Naive thymus-derived CD4-positive, alpha-beta T cell (primary cell): ENCODE measurements at regions of chr12 and their contacts with region 1.

Region 1: GRCh38 chr12:7188562-7189397 is 706 bp upstream of the PEX5 start:
- DNase-seq: peak; percentile 34 to 64 (median 58)
- ATAC-seq: peak; percentile 40
- H3K4me3 ChIP-seq: peak overlapping the region; percentile 89
- H3K4me3 Mint-ChIP-seq: peak overlapping the region; percentile 92 to 99 (median 97)
- H3K27ac ChIP-seq: peak overlapping the region; percentile 92
- H3K27ac Mint-ChIP-seq: peak overlapping the region; percentile 93 to 99 (median 98)
- H3K4me1 ChIP-seq: peaks cover 10 to 28% of the 10 kb centered on the region in 2 donors
- H3K4me1 Mint-ChIP-seq: peaks cover 18 to 48% (median 40%) of the 10 kb centered on the region in 7 donors
- H3K27me3 ChIP-seq: no peaks in the 10 kb centered on the region
- H3K27me3 Mint-ChIP-seq: no peaks in the 10 kb centered on the region

Region 2: GRCh38 chr12:6937481-6938297 is 251.1 kb before region 1 on chr12:
- CTCF ChIA-PET with region 1: no interaction called
- POLR2A ChIA-PET with region 1: no interaction called
- intact Hi-C with region 1: loop called in 1 of 2 experiments (anchors 5 kb)
- DNase-seq: peak; percentile 81 to 96 (median 93)
- ATAC-seq: peak; percentile 97
- H3K4me3 ChIP-seq: peak overlapping the region; percentile 90
- H3K4me3 Mint-ChIP-seq: peak overlapping the region; percentile 75 to 88 (median 84)
- H3K27ac ChIP-seq: peak overlapping the region; percentile 92
- H3K27ac Mint-ChIP-seq: peak overlapping the region; percentile 91 to 99 (median 96)
- H3K4me1 ChIP-seq: peaks cover 5 to 29% of the 10 kb centered on the region in 2 donors
- H3K4me1 Mint-ChIP-seq: peaks cover 41 to 67% (median 51%) of the 10 kb centered on the region in 7 donors
- H3K27me3 ChIP-seq: no peaks in the 10 kb centered on the region
- H3K27me3 Mint-ChIP-seq: no peaks in the 10 kb centered on the region

Region 3: GRCh38 chr12:7108796-7109571 is 79.8 kb before region 1 on chr12 and contains the start of gene C1RL:
- CTCF ChIA-PET with region 1: interaction called, 6 read pairs
- POLR2A ChIA-PET with region 1: no interaction called
- intact Hi-C with region 1: loop called in 1 of 2 experiments (anchors 1 kb)
- DNase-seq: peak; percentile 50 to 88 (median 65)
- ATAC-seq: peak; percentile 69
- H3K4me3 ChIP-seq: peak within 1 kb of the TSS; percentile 95
- H3K4me3 Mint-ChIP-seq: peak within 1 kb of the TSS; percentile 90 to 98 (median 94)
- H3K27ac ChIP-seq: peak within 1 kb of the TSS; percentile 79
- H3K27ac Mint-ChIP-seq: peak within 1 kb of the TSS; percentile 84 to 95 (median 93)
- H3K4me1 ChIP-seq: peaks cover 6% of the 10 kb centered on the region in 2 donors
- H3K4me1 Mint-ChIP-seq: peaks cover 29 to 64% (median 43%) of the 10 kb centered on the region in 7 donors
- H3K27me3 ChIP-seq: no peaks in the 10 kb centered on the region
- H3K27me3 Mint-ChIP-seq: no peaks in the 10 kb centered on the region
- total RNA-seq, gene C1RL: 18.5 to 38.6 (median 24.4) TPM

Region 4: DNA sequence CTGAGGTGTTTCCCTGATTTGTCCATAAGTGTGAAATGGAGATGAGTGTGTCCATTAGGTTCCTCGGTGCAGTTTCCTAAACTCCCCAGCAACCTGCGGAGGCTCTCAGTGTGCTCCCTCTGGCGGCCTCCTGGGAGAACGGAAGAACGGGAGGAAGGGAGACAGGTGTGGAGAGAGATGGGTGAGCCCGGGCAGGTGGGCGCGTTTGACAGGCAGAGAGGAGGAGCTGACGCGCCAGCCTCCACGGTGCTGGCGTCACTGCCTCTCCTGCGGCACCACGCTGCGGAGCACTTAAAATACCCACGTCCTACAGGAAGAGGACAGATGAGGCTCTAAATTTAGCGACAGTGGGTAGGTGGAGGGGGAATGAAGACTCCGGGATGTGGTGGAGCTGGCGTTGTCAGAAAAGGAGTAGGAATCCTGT is 26.1 kb before region 1 on chr12:
- CTCF ChIA-PET with region 1: no interaction called
- POLR2A ChIA-PET with region 1: no interaction called
- intact Hi-C with region 1: loop called in 1 of 2 experiments (anchors 1 kb)
- DNase-seq: peak in 7 of 9 donors; percentile 14 to 30 (median 21)
- ATAC-seq: peak; percentile 62
- H3K4me3 ChIP-seq: peak overlapping the region; percentile 39
- H3K4me3 Mint-ChIP-seq: peak overlapping the region; percentile 5 to 83 (median 72)
- H3K27ac ChIP-seq: no peak overlapping the region
- H3K27ac Mint-ChIP-seq: peak overlapping the region in 1 of 9 donors; percentile 47
- H3K4me1 ChIP-seq: peaks cover 0 to 2% of the 10 kb centered on the region in 2 donors
- H3K4me1 Mint-ChIP-seq: peaks cover 5 to 15% (median 12%) of the 10 kb centered on the region in 7 donors
- H3K27me3 ChIP-seq: no peaks in the 10 kb centered on the region
- H3K27me3 Mint-ChIP-seq: peaks cover 0 to 31% (median 19%) of the 10 kb centered on the region in 5 donors

Region 5: DNA sequence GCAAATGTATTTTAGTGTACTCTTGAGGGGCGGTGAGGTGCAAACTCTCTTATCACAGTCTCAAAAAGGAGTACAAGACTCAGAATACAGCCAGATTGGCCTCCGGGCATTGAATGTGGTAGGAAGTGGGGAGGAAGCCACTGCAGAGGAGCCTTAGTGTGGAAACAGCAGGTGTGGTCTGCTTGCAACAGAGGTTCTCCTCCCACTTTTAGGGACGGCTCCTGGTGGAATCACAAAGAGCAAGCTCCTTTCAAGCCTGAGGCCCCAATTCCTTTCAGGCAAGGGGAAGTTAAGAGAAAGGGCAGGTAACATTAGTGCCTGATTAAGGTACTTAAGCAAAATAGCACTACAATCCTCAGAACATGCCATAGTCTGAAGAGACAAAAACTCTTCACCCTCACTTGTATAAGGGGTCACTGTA is 770.9 kb after region 1 on chr12:
- CTCF ChIA-PET with region 1: no interaction called
- POLR2A ChIA-PET with region 1: no interaction called
- intact Hi-C with region 1: loop called in 1 of 2 experiments (anchors 5 kb)
- DNase-seq: peak in 8 of 9 donors; percentile 34 to 49 (median 40)
- ATAC-seq: peak; percentile 33
- H3K4me3 ChIP-seq: peak overlapping the region; percentile 79
- H3K4me3 Mint-ChIP-seq: peak overlapping the region; percentile 80 to 97 (median 89)
- H3K27ac ChIP-seq: peak overlapping the region; percentile 87
- H3K27ac Mint-ChIP-seq: peak overlapping the region; percentile 87 to 99 (median 95)
- H3K4me1 ChIP-seq: peaks cover 26 to 29% of the 10 kb centered on the region in 2 donors
- H3K4me1 Mint-ChIP-seq: peaks cover 27 to 51% (median 46%) of the 10 kb centered on the region in 7 donors
- H3K27me3 ChIP-seq: no peaks in the 10 kb centered on the region
- H3K27me3 Mint-ChIP-seq: no peaks in the 10 kb centered on the region

Region 6: DNA sequence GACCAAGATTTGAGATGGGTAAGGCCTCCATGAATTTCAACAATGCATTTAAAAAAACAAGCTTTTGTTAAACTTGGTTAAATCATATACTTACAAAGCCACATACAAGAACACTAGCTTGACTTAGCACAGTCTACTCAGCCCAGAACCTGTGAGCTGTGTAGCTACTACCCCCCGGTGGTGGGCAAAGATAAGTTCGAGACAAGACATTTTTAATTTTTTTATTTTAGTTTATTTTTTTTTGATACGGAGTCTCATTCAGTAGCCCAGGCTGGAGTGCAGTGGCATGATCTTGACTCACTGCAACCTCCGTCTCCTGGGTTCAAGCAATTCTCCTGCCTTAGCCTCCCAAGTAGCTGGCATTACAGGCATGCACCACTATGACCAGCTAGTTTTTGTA is 889.6 kb after region 1 on chr12:
- CTCF ChIA-PET with region 1: no interaction called
- POLR2A ChIA-PET with region 1: no interaction called
- intact Hi-C with region 1: loop called (anchors 1 to 5 kb)
- DNase-seq: peak in 8 of 9 donors; percentile 36 to 82 (median 78)
- ATAC-seq: peak; percentile 45
- H3K4me3 ChIP-seq: no peak overlapping the region
- H3K4me3 Mint-ChIP-seq: peak overlapping the region in 6 of 10 donors; percentile 18 to 49 (median 30)
- H3K27ac ChIP-seq: peak overlapping the region; percentile 94
- H3K27ac Mint-ChIP-seq: peak overlapping the region in 8 of 9 donors; percentile 86 to 100 (median 98)
- H3K4me1 ChIP-seq: peaks cover 21 to 40% of the 10 kb centered on the region in 2 donors
- H3K4me1 Mint-ChIP-seq: peaks cover 19 to 63% (median 41%) of the 10 kb centered on the region in 7 donors
- H3K27me3 ChIP-seq: no peaks in the 10 kb centered on the region
- H3K27me3 Mint-ChIP-seq: peaks cover 0 to 2% (median 0%) of the 10 kb centered on the region in 5 donors